Psoas muscle (tissue), 8 donors: ENCODE measurements at regions of chr11 and their contacts with region 1.

Region 1: GRCh38 chr11:6473481-6474422 is at the start of gene TRIM3:
- DNase-seq: peak; percentile 96 to 97
- ATAC-seq: peak; percentile 91 to 95 (median 92)
- H3K4me3 ChIP-seq: peak within 1 kb of the TSS; percentile 91
- H3K27ac ChIP-seq: peak within 1 kb of the TSS; percentile 93
- H3K4me1 ChIP-seq: peaks cover 15% of the 10 kb centered on the region
- H3K27me3 ChIP-seq: no peaks in the 10 kb centered on the region
- CTCF ChIP-seq: no peak
- total RNA-seq, gene TRIM3: 9.6 to 15.3 (median 12.7) TPM

Region 2: DNA sequence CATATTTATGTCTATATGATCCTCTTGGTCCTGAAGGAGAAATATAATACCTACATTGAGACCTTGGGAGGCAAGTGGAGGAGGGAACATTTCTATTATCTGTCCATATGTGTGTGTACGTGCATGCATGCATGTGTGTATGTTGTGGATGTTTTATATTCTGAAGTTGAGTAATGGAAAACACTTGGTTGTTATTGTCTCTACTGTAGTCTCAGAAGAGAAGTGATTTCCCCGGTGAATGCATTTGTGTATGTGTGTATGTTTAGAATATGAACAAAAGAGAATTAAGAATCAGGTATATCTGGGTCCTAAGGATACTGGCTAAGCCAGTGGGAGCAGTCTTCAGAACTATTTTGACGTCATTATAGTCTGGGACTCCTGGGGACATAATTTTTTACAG is 682.6 kb before region 1 on chr11 and contains the start of gene OR52N1:
- intact Hi-C with region 1: no loop called
- DNase-seq: no peak
- ATAC-seq: no peak
- H3K4me3 ChIP-seq: no peak within 1 kb of the TSS
- H3K27ac ChIP-seq: no peak within 1 kb of the TSS
- H3K4me1 ChIP-seq: no peaks in the 10 kb centered on the region
- H3K27me3 ChIP-seq: no peaks in the 10 kb centered on the region
- CTCF ChIP-seq: no peak
- total RNA-seq, gene OR52N1: not detected

Region 3: GRCh38 chr11:6234387-6235107 is 239.2 kb before region 1 on chr11 and contains the start of gene FHIP1B:
- intact Hi-C with region 1: loop called (anchors 10 kb)
- DNase-seq: peak; percentile 100
- ATAC-seq: peak; percentile 97 to 99 (median 98)
- H3K4me3 ChIP-seq: peak within 1 kb of the TSS; percentile 83
- H3K27ac ChIP-seq: peak within 1 kb of the TSS; percentile 77
- H3K4me1 ChIP-seq: peaks cover 19% of the 10 kb centered on the region
- H3K27me3 ChIP-seq: no peaks in the 10 kb centered on the region
- CTCF ChIP-seq: no peak
- total RNA-seq, gene FHIP1B: 9.1 to 21.6 (median 15.6) TPM

Region 4: GRCh38 chr11:6419009-6419631 is 54.6 kb before region 1 on chr11 and contains the start of gene APBB1:
- intact Hi-C with region 1: no loop called
- DNase-seq: peak; percentile 77 to 84
- ATAC-seq: peak; percentile 94 to 98 (median 96)
- H3K4me3 ChIP-seq: peak within 1 kb of the TSS; percentile 90
- H3K27ac ChIP-seq: peak within 1 kb of the TSS; percentile 89
- H3K4me1 ChIP-seq: peaks cover 9% of the 10 kb centered on the region
- H3K27me3 ChIP-seq: peaks cover 0 to 1% (median 0%) of the 10 kb centered on the region in 3 donors
- CTCF ChIP-seq: peak; percentile 18
- total RNA-seq, gene APBB1: 36.5 to 53.9 (median 43.0) TPM

Region 5: GRCh38 chr11:6635082-6635932 is 161.6 kb after region 1 on chr11:
- intact Hi-C with region 1: no loop called
- DNase-seq: peak; percentile 51 to 81
- ATAC-seq: peak; percentile 46 to 69 (median 54)
- H3K4me3 ChIP-seq: no peak overlapping the region
- H3K27ac ChIP-seq: peak overlapping the region; percentile 46
- H3K4me1 ChIP-seq: peaks cover 4% of the 10 kb centered on the region
- H3K27me3 ChIP-seq: no peaks in the 10 kb centered on the region
- CTCF ChIP-seq: no peak